CD4-positive, alpha-beta memory T cell (primary cell): ENCODE measurements at regions of chr12 and their contacts with region 1.

Region 1: GRCh38 chr12:21677622-21678277 is 20.1 kb upstream of the LDHB start:
- DNase-seq: peak; percentile 37 to 57 (median 45)
- H3K4me3 ChIP-seq: peak overlapping the region; percentile 16 to 49
- H3K4me3 Mint-ChIP-seq: peak overlapping the region; percentile 67 to 91 (median 81)
- H3K27ac ChIP-seq: peak overlapping the region; percentile 45
- H3K27ac Mint-ChIP-seq: peak overlapping the region; percentile 81 to 97 (median 85)
- H3K4me1 ChIP-seq: peaks cover 58% of the 10 kb centered on the region
- H3K4me1 Mint-ChIP-seq: peaks cover 43 to 62% (median 54%) of the 10 kb centered on the region in 4 donors
- H3K27me3 ChIP-seq: no peaks in the 10 kb centered on the region
- H3K27me3 Mint-ChIP-seq: no peaks in the 10 kb centered on the region

Region 2: DNA sequence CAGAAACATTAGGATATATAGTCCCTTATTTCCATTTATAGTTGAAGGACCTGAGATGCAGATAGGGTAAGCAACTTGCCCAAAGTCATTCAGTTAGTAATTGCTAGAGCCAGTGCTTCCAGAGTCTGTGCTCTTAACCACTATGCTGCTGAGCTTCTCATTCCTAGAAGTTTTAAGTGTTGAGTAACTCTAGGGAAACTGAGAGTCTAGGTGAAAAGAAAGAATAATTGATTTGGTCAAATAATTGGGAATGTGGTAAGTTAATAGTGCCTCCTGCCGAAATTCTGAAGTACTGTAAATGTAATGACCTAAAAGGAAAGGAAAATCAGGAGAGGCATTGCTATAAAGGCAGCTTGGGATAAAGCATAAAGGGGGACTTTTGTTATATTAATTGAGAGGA is 226.2 kb before region 1 on chr12:
- CTCF ChIA-PET with region 1: interaction called, 3 read pairs
- POLR2A ChIA-PET with region 1: interaction called, 6 read pairs
- intact Hi-C with region 1: loop called (anchors 2 kb)
- DNase-seq: no peak
- H3K4me3 ChIP-seq: no peak overlapping the region
- H3K4me3 Mint-ChIP-seq: peak overlapping the region in 1 of 8 donors; percentile 53
- H3K27ac ChIP-seq: no peak overlapping the region
- H3K27ac Mint-ChIP-seq: peak overlapping the region in 5 of 7 donors; percentile 2 to 88 (median 67)
- H3K4me1 ChIP-seq: peaks cover 40% of the 10 kb centered on the region
- H3K4me1 Mint-ChIP-seq: peaks cover 27 to 43% (median 37%) of the 10 kb centered on the region in 4 donors
- H3K27me3 ChIP-seq: no peaks in the 10 kb centered on the region
- H3K27me3 Mint-ChIP-seq: no peaks in the 10 kb centered on the region

Region 3: GRCh38 chr12:21613931-21614330 is 63.8 kb before region 1 on chr12:
- CTCF ChIA-PET with region 1: interaction called, 200 read pairs
- POLR2A ChIA-PET with region 1: interaction called, 14 read pairs
- intact Hi-C with region 1: no loop called
- DNase-seq: no peak
- H3K4me3 ChIP-seq: peak overlapping the region in 1 of 2 donors; percentile 18
- H3K4me3 Mint-ChIP-seq: peak overlapping the region in 6 of 8 donors; percentile 0 to 79 (median 42)
- H3K27ac ChIP-seq: peak overlapping the region; percentile 1
- H3K27ac Mint-ChIP-seq: peak overlapping the region in 6 of 7 donors; percentile 65 to 89 (median 86)
- H3K4me1 ChIP-seq: peaks cover 58% of the 10 kb centered on the region
- H3K4me1 Mint-ChIP-seq: peaks cover 41 to 64% (median 53%) of the 10 kb centered on the region in 4 donors
- H3K27me3 ChIP-seq: no peaks in the 10 kb centered on the region
- H3K27me3 Mint-ChIP-seq: no peaks in the 10 kb centered on the region

Region 4: GRCh38 chr12:21650833-21651396 is 26.8 kb before region 1 on chr12:
- CTCF ChIA-PET with region 1: interaction called, 79 read pairs
- POLR2A ChIA-PET with region 1: interaction called, 245 read pairs
- intact Hi-C with region 1: no loop called
- DNase-seq: no peak
- H3K4me3 ChIP-seq: no peak overlapping the region
- H3K4me3 Mint-ChIP-seq: peak overlapping the region; percentile 8 to 72 (median 52)
- H3K27ac ChIP-seq: no peak overlapping the region
- H3K27ac Mint-ChIP-seq: peak overlapping the region in 5 of 7 donors; percentile 55 to 94 (median 62)
- H3K4me1 ChIP-seq: peaks cover 91% of the 10 kb centered on the region
- H3K4me1 Mint-ChIP-seq: peaks cover 60 to 97% (median 84%) of the 10 kb centered on the region in 4 donors
- H3K27me3 ChIP-seq: no peaks in the 10 kb centered on the region
- H3K27me3 Mint-ChIP-seq: no peaks in the 10 kb centered on the region

Region 5: GRCh38 chr12:21690704-21691368 is 13.1 kb after region 1 on chr12:
- CTCF ChIA-PET with region 1: interaction called, 61 read pairs
- POLR2A ChIA-PET with region 1: interaction called, 12 read pairs
- intact Hi-C with region 1: no loop called
- DNase-seq: peak in 3 of 5 donors; percentile 42 to 45 (median 45)
- H3K4me3 ChIP-seq: no peak overlapping the region
- H3K4me3 Mint-ChIP-seq: peak overlapping the region in 7 of 8 donors; percentile 2 to 77 (median 65)
- H3K27ac ChIP-seq: no peak overlapping the region
- H3K27ac Mint-ChIP-seq: peak overlapping the region; percentile 21 to 91 (median 83)
- H3K4me1 ChIP-seq: peaks cover 28% of the 10 kb centered on the region
- H3K4me1 Mint-ChIP-seq: peaks cover 24 to 32% (median 30%) of the 10 kb centered on the region in 4 donors
- H3K27me3 ChIP-seq: no peaks in the 10 kb centered on the region
- H3K27me3 Mint-ChIP-seq: no peaks in the 10 kb centered on the region